ENCODE measurements at regions of chr2 and their contacts with region 1.

Region 1: DNA sequence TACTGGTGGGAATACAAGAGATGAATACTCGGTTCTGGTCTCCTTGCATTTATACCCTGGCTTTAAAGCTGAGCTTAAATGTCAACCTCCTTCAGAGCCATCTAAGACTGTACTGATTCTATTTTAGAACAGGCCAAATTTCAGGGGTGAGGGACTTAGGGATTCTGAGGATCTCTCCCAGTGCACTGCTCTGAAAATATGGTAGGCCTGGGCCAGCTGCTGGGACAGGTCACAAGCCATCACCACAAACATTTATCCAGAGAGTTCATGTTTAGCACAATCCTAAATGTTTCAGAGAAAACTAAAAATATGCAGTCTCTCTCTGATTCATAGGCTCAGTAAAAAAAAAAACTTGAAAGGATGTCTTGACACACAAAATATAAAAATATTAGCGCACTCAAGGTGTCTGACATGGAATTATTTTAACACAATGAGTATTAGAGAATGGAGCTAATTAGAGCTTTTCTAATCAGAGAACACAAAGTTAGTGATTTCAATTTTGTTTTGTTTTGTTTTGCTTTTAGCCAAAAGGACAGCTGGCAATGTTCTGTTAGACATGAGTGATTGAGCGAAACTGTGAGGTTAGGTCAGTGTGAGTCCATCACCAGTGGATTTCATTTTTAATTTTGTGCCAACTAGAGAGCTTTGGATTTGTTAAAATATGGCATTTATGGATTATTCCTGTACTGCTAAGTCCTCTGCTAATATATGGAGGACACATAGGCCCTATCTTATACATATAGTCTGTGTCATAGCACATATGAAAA is 38.8 kb downstream of the MFSD6 start:
- DNase-seq: no peak
- CTCF ChIP-seq: no peak

Region 2: GRCh38 chr2:190408538-190409271 is 38.2 kb before region 1 on chr2:
- CTCF ChIA-PET with region 1: no interaction called
- POLR2A ChIA-PET with region 1: no interaction called
- DNase-seq: peak; percentile 73
- CTCF ChIP-seq: no peak

Region 3: GRCh38 chr2:190435031-190435670 is 11.8 kb before region 1 on chr2:
- CTCF ChIA-PET with region 1: interaction called, 19 read pairs
- POLR2A ChIA-PET with region 1: no interaction called
- DNase-seq: no peak
- CTCF ChIP-seq: no peak

Region 4: DNA sequence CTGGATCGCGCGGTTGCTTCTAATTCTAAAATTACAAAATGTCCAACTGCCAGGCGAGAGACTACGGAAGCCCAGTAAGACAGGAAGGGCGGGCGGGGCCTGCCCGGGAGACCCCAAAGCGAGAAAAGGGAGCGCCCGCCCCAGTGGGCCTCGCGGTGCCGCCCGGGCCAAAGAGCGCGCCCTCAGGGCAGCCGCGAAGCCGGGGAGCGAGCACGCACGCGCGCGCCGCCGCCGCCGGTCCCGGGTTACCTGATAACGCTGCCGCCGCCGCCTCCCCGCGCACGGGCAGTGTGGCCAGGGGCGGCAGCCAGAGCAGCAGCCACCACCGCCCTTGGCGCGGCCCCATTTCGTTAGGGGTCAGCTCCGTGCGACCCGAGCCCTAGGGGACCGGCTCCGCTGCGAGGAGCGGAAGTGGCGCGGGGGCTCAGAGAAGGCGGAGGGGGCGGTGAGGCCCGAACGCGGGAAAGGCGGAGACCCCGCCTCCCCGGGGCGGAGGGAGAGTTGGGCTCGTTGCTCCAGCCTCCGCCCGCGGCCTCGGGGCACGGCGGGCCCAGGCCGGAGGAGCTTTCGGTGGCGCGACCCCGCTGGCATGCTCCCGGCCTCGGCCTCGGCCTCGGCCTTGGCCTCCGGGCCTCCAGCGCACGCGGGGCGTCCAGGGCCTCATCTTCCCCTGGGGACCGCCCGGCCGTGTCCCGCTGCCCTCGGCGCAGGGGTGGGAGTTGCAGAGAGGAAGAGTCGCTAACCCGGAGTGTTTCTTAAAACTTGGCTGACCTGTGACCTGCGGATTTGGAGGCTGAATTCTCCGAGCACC is 87.6 kb after region 1 on chr2 and contains the start of gene NEMP2:
- CTCF ChIA-PET with region 1: no interaction called
- POLR2A ChIA-PET with region 1: no interaction called
- DNase-seq: peak; percentile 85
- CTCF ChIP-seq: no peak